ENCODE measurements at regions of chr4 and their contacts with region 1.

Region 1: GRCh38 chr4:55948726-55949474 is at the start of gene CEP135:
- DNase-seq: peak; percentile 85 to 96 (median 92)
- ATAC-seq: peak; percentile 70
- H3K4me3 ChIP-seq: peak within 1 kb of the TSS; percentile 66 to 86
- H3K4me3 Mint-ChIP-seq: peak within 1 kb of the TSS; percentile 88
- H3K27ac ChIP-seq: peak within 1 kb of the TSS; percentile 72 to 88
- H3K27ac Mint-ChIP-seq: peak within 1 kb of the TSS; percentile 92
- H3K4me1 ChIP-seq: peaks cover 21% of the 10 kb centered on the region
- H3K4me1 Mint-ChIP-seq: peaks cover 46% of the 10 kb centered on the region
- H3K27me3 ChIP-seq: no peaks in the 10 kb centered on the region
- H3K27me3 Mint-ChIP-seq: no peaks in the 10 kb centered on the region
- CTCF ChIP-seq: peak; percentile 78
- total RNA-seq, gene CEP135: 16.6 to 17.1 TPM

Region 2: GRCh38 chr4:54064295-54065111 is 1884.4 kb before region 1 on chr4 and contains the start of gene CHIC2:
- CTCF ChIA-PET with region 1: no interaction called
- POLR2A ChIA-PET with region 1: no interaction called
- intact Hi-C with region 1: loop called (anchors 2 to 10 kb)
- DNase-seq: peak; percentile 94 to 99 (median 97)
- ATAC-seq: peak; percentile 86
- H3K4me3 ChIP-seq: peak within 1 kb of the TSS; percentile 91 to 99
- H3K4me3 Mint-ChIP-seq: peak within 1 kb of the TSS; percentile 96
- H3K27ac ChIP-seq: peak within 1 kb of the TSS; percentile 87 to 99
- H3K27ac Mint-ChIP-seq: peak within 1 kb of the TSS; percentile 99
- H3K4me1 ChIP-seq: peaks cover 35% of the 10 kb centered on the region
- H3K4me1 Mint-ChIP-seq: peaks cover 49% of the 10 kb centered on the region
- H3K27me3 ChIP-seq: no peaks in the 10 kb centered on the region
- H3K27me3 Mint-ChIP-seq: no peaks in the 10 kb centered on the region
- CTCF ChIP-seq: no peak
- total RNA-seq, gene CHIC2: 67.3 to 69.3 TPM

Region 3: DNA sequence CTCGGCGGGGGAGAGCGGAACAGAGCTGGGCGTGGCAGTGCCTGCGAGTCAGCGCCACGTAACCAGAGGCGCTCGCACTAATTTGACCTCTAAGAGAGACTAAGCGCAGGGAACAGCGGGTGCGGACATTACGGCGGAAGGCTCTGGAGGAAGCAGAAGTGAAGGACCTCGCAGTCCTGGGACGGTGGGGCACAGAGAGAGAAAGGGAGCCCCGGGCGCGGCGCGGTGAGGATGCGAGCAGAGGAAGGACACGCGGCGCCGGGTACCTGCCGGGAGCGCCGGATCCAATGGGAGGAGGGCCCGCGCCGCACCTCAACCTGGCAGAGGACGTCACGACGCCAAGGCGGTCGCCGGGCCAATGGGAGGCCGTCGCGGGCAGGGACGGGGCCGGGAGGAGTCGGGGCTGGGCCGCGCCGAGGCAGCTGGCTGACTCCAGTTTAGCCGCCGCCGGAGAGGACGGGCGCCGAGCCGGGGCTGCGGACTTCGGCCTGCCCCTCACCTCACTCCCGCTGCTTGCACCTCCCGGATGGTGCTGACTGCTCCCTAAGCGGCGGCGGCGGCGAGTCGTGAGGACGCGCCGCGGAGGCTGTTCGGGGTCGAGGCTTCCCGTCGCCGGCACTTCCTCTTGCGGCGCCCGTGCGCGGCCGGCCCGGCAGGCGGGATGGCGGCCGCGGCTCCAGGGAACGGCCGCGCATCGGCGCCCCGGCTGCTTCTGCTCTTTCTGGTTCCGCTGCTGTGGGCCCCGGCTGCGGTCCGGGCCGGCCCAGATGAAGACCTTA is 553.2 kb before region 1 on chr4 and contains the start of gene TMEM165:
- CTCF ChIA-PET with region 1: no interaction called
- POLR2A ChIA-PET with region 1: no interaction called
- intact Hi-C with region 1: loop called (anchors 1 to 5 kb)
- DNase-seq: peak; percentile 72 to 93 (median 86)
- ATAC-seq: peak; percentile 94
- H3K4me3 ChIP-seq: peak within 1 kb of the TSS; percentile 68 to 74
- H3K4me3 Mint-ChIP-seq: peak within 1 kb of the TSS; percentile 97
- H3K27ac ChIP-seq: peak within 1 kb of the TSS; percentile 83 to 93
- H3K27ac Mint-ChIP-seq: peak within 1 kb of the TSS; percentile 98
- H3K4me1 ChIP-seq: peaks cover 36% of the 10 kb centered on the region
- H3K4me1 Mint-ChIP-seq: peaks cover 38% of the 10 kb centered on the region
- H3K27me3 ChIP-seq: no peaks in the 10 kb centered on the region
- H3K27me3 Mint-ChIP-seq: no peaks in the 10 kb centered on the region
- CTCF ChIP-seq: peak; percentile 0
- total RNA-seq, gene TMEM165: 31.0 to 31.5 TPM

Region 4: GRCh38 chr4:55906999-55907398 is 41.9 kb before region 1 on chr4:
- CTCF ChIA-PET with region 1: interaction called, 6 read pairs
- POLR2A ChIA-PET with region 1: interaction called, 5 read pairs
- intact Hi-C with region 1: loop called in 1 of 2 experiments (anchors 5 kb)
- DNase-seq: peak in 1 of 9 experiments; percentile 3
- ATAC-seq: no peak
- H3K4me3 ChIP-seq: no peak overlapping the region
- H3K4me3 Mint-ChIP-seq: peak overlapping the region; percentile 37
- H3K27ac ChIP-seq: peak overlapping the region in 1 of 2 experiments; percentile 20
- H3K27ac Mint-ChIP-seq: peak overlapping the region; percentile 55
- H3K4me1 ChIP-seq: peaks cover 9% of the 10 kb centered on the region
- H3K4me1 Mint-ChIP-seq: peaks cover 14% of the 10 kb centered on the region
- H3K27me3 ChIP-seq: no peaks in the 10 kb centered on the region
- H3K27me3 Mint-ChIP-seq: no peaks in the 10 kb centered on the region
- CTCF ChIP-seq: no peak

Region 5: GRCh38 chr4:56435306-56435926 is 486.5 kb after region 1 on chr4 and contains the start of gene PPAT:
- CTCF ChIA-PET with region 1: interaction called, 3 read pairs
- POLR2A ChIA-PET with region 1: interaction called, 17 read pairs
- intact Hi-C with region 1: loop called in 1 of 2 experiments (anchors 1 kb)
- DNase-seq: peak; percentile 97 to 99 (median 99)
- ATAC-seq: peak; percentile 84
- H3K4me3 ChIP-seq: peak within 1 kb of the TSS; percentile 83 to 95
- H3K4me3 Mint-ChIP-seq: peak within 1 kb of the TSS; percentile 95
- H3K27ac ChIP-seq: peak within 1 kb of the TSS; percentile 73 to 93
- H3K27ac Mint-ChIP-seq: peak within 1 kb of the TSS; percentile 97
- H3K4me1 ChIP-seq: peaks cover 28% of the 10 kb centered on the region
- H3K4me1 Mint-ChIP-seq: peaks cover 58% of the 10 kb centered on the region
- H3K27me3 ChIP-seq: no peaks in the 10 kb centered on the region
- H3K27me3 Mint-ChIP-seq: no peaks in the 10 kb centered on the region
- CTCF ChIP-seq: no peak
- total RNA-seq, gene PPAT: 6.9 to 7.0 TPM

Region 6: DNA sequence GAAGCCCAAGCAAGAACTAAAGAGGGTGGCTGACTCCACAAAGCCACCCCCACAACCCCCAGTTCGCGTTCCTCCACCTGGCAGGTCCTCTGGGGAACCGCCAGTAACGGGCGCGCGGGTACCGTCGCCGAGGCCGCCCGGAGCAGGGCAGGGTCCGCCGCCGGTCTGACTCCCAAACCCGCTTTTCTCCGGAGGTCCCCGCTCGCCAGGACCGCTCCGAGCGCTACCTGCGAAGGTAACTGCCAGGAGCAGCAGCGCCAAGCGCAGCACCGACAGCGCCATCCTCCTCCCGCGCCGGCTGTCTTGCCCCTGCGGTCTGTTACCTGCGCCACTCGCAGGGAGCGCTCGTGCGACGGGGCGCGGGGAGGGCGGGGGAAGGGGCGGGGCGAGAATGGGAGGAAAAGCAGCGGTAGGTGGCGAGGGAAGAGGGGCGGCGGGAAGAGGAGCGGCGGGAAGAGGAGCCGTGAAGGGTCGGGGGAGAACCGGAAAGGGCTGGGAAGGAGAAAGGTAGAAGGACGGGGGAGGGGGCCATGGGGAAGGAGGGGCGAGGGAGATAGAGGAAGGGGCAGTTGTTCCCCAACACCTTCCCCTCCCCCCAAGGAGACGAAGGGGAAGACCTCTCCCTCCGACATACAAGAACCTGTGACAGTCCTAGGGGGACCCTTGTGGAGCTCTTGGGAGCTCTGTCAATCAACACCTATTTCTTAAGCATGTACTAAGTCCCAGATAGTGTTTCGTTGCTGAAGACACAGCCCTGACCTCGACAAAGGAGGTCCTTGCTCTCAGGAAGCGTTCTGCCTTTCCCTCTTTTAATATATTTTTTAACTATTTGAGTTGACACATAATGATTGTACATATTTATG is 872.7 kb after region 1 on chr4 and contains the start of gene SPINK2:
- CTCF ChIA-PET with region 1: no interaction called
- POLR2A ChIA-PET with region 1: no interaction called
- intact Hi-C with region 1: loop called (anchors 5 kb)
- DNase-seq: peak; percentile 41 to 88 (median 76)
- ATAC-seq: peak; percentile 87
- H3K4me3 ChIP-seq: peak within 1 kb of the TSS; percentile 58 to 65
- H3K4me3 Mint-ChIP-seq: peak within 1 kb of the TSS; percentile 81
- H3K27ac ChIP-seq: peak within 1 kb of the TSS; percentile 36
- H3K27ac Mint-ChIP-seq: peak within 1 kb of the TSS; percentile 27
- H3K4me1 ChIP-seq: peaks cover 34% of the 10 kb centered on the region
- H3K4me1 Mint-ChIP-seq: peaks cover 36% of the 10 kb centered on the region
- H3K27me3 ChIP-seq: no peaks in the 10 kb centered on the region
- H3K27me3 Mint-ChIP-seq: no peaks in the 10 kb centered on the region
- CTCF ChIP-seq: no peak
- total RNA-seq, gene SPINK2: 2.6 to 4.4 TPM